T-cell (primary cell): ENCODE measurements at regions of chr16 and their contacts with region 1.

Region 1: GRCh38 chr16:87416826-87417527 is 24.8 kb downstream of the MAP1LC3B start:
- DNase-seq: peak in 24 of 35 experiments; percentile 6 to 54 (median 28)
- ATAC-seq: no peak
- H3K4me3 ChIP-seq: no peak overlapping the region
- H3K4me3 Mint-ChIP-seq: no peak overlapping the region
- H3K27ac ChIP-seq: no peak overlapping the region
- H3K27ac Mint-ChIP-seq: no peak overlapping the region
- H3K4me1 ChIP-seq: no peaks in the 10 kb centered on the region
- H3K4me1 Mint-ChIP-seq: no peaks in the 10 kb centered on the region
- H3K27me3 ChIP-seq: no peaks in the 10 kb centered on the region
- H3K27me3 Mint-ChIP-seq: no peaks in the 10 kb centered on the region

Region 2: GRCh38 chr16:87636072-87636684 is 219.2 kb after region 1 on chr16:
- CTCF ChIA-PET with region 1: interaction called, 11 to 19 read pairs
- POLR2A ChIA-PET with region 1: no interaction called
- DNase-seq: peak; percentile 58 to 86 (median 75)
- ATAC-seq: peak; percentile 82 to 87 (median 84)
- H3K4me3 ChIP-seq: peak overlapping the region; percentile 54 to 57
- H3K4me3 Mint-ChIP-seq: peak overlapping the region; percentile 81 to 84 (median 83)
- H3K27ac ChIP-seq: peak overlapping the region; percentile 55
- H3K27ac Mint-ChIP-seq: peak overlapping the region; percentile 81 to 91
- H3K4me1 ChIP-seq: peaks cover 0 to 25% of the 10 kb centered on the region in 2 experiments
- H3K4me1 Mint-ChIP-seq: peaks cover 16 to 20% (median 20%) of the 10 kb centered on the region in 3 donors
- H3K27me3 ChIP-seq: peaks cover 2 to 14% of the 10 kb centered on the region in 2 experiments
- H3K27me3 Mint-ChIP-seq: peaks cover 3 to 16% of the 10 kb centered on the region in 2 donors